ENCODE measurements at regions of chr15 and their contacts with region 1.

Region 1: GRCh38 chr15:35519541-35520149 is 26.3 kb downstream of the DPH6 start:
- DNase-seq: no peak
- H3K4me3 Mint-ChIP-seq: no peak overlapping the region
- H3K27ac Mint-ChIP-seq: no peak overlapping the region
- H3K4me1 Mint-ChIP-seq: no peaks in the 10 kb centered on the region
- H3K27me3 Mint-ChIP-seq: no peaks in the 10 kb centered on the region
- CTCF ChIP-seq: peak; percentile 13

Region 2: GRCh38 chr15:34889476-34889875 is 630.2 kb before region 1 on chr15:
- CTCF ChIA-PET with region 1: no interaction called
- intact Hi-C with region 1: no loop called
- DNase-seq: no peak
- H3K4me3 Mint-ChIP-seq: no peak overlapping the region
- H3K27ac Mint-ChIP-seq: no peak overlapping the region
- H3K4me1 Mint-ChIP-seq: no peaks in the 10 kb centered on the region
- H3K27me3 Mint-ChIP-seq: no peaks in the 10 kb centered on the region
- CTCF ChIP-seq: no peak

Region 3: GRCh38 chr15:35379972-35380371 is 139.7 kb before region 1 on chr15:
- CTCF ChIA-PET with region 1: no interaction called
- intact Hi-C with region 1: no loop called
- DNase-seq: no peak
- H3K4me3 Mint-ChIP-seq: no peak overlapping the region
- H3K27ac Mint-ChIP-seq: no peak overlapping the region
- H3K4me1 Mint-ChIP-seq: no peaks in the 10 kb centered on the region
- H3K27me3 Mint-ChIP-seq: no peaks in the 10 kb centered on the region
- CTCF ChIP-seq: no peak

Region 4: GRCh38 chr15:35540885-35541284 is 21.2 kb after region 1 on chr15:
- CTCF ChIA-PET with region 1: no interaction called
- intact Hi-C with region 1: no loop called
- DNase-seq: no peak
- H3K4me3 Mint-ChIP-seq: no peak overlapping the region
- H3K27ac Mint-ChIP-seq: no peak overlapping the region
- H3K4me1 Mint-ChIP-seq: no peaks in the 10 kb centered on the region
- H3K27me3 Mint-ChIP-seq: no peaks in the 10 kb centered on the region
- CTCF ChIP-seq: no peak

Region 5: DNA sequence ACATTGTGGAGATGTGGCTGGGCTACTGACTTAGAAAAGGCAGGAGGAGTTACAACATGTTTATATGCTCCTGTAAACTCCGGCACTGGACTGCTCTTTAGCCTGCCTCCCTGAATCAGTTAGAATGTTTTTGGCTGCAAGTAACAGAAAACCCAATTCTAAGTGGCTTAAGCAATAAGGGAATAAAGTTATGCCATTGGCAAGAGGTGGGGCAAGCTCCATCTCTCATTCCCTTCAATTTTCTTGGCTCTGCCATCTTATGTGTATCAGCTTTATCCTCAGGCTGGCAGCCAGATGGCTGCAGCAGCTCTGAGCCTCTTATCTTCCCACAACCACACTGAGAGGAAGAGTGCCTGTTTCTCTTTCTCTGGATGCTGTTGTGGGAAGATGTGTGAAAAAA is 1603.1 kb after region 1 on chr15:
- CTCF ChIA-PET with region 1: no interaction called
- intact Hi-C with region 1: loop called (anchors 2 kb)
- DNase-seq: no peak
- H3K4me3 Mint-ChIP-seq: no peak overlapping the region
- H3K27ac Mint-ChIP-seq: no peak overlapping the region
- H3K4me1 Mint-ChIP-seq: no peaks in the 10 kb centered on the region
- H3K27me3 Mint-ChIP-seq: no peaks in the 10 kb centered on the region
- CTCF ChIP-seq: no peak

Measured in Calu3 (cell line).